ENCODE measurements at regions of chr5 and their contacts with region 1.

Region 1: GRCh38 chr5:56552612-56553268 is 262.6 kb upstream of the MAP3K1 start:
- DNase-seq: no peak
- H3K4me3 ChIP-seq: no peak overlapping the region
- H3K27ac ChIP-seq: no peak overlapping the region
- H3K4me1 ChIP-seq: peaks cover 11% of the 10 kb centered on the region; the same call in 1 of the 2 replicates
- H3K27me3 ChIP-seq: no peaks in the 10 kb centered on the region
- CTCF ChIP-seq: no peak

Region 2: DNA sequence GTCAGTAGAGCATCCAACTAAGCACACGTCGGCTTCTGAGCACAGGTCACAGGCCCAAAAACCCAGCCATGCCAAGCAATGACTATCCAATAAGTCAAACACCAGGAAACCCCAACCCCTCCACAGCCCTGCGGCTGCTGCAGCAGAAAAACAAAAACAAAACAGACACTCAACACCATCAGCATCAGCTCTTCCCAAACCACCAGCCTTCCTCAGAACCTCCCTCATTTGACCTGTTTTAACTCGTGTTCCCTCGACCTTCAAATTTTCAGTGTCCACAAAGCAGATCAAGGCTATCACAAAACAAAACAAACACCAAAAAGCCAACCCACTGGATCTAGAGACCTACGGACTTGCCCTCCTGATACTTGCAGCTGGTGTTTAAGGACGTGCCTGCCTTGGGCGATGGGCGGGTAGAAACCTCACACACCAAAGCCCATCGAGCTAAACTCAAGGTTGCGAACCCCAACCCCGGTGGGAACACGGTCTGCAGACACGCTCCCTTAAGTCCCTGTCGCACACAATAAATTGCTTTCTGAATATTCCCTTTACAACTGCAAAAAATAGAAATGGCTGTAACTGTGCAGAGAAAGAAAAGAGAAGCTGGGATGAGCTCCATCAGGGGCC is 72.5 kb before region 1 on chr5:
- CTCF ChIA-PET with region 1: no interaction called
- POLR2A ChIA-PET with region 1: no interaction called
- intact Hi-C with region 1: no loop called
- DNase-seq: peak in 1 of 2 experiments; percentile 8
- H3K4me3 ChIP-seq: peak overlapping the region; percentile 78
- H3K27ac ChIP-seq: peak overlapping the region; percentile 85
- H3K4me1 ChIP-seq: peaks cover 53% of the 10 kb centered on the region
- H3K27me3 ChIP-seq: no peaks in the 10 kb centered on the region
- CTCF ChIP-seq: no peak

Region 3: GRCh38 chr5:56588636-56589480 is 36.1 kb after region 1 on chr5:
- CTCF ChIA-PET with region 1: no interaction called
- POLR2A ChIA-PET with region 1: interaction called, 12 read pairs
- intact Hi-C with region 1: no loop called
- DNase-seq: no peak
- H3K4me3 ChIP-seq: no peak overlapping the region
- H3K27ac ChIP-seq: no peak overlapping the region
- H3K4me1 ChIP-seq: 0 out of 2 replicates have a peak, but pooled peaks cover 5% of the 10 kb centered on the region
- H3K27me3 ChIP-seq: no peaks in the 10 kb centered on the region
- CTCF ChIP-seq: no peak